ENCODE measurements at regions of chr2 and their contacts with region 1.

Region 1: GRCh38 chr2:218806346-218806978 is 24.5 kb downstream of the CYP27A1 start:
- DNase-seq: peak; percentile 91
- ATAC-seq: peak; percentile 81
- H3K4me3 ChIP-seq: peak overlapping the region in 2 of 3 experiments; percentile 38 to 40; a peak in 4 of 6 replicates
- H3K27ac ChIP-seq: peak overlapping the region; percentile 54
- H3K4me1 ChIP-seq: peaks cover 32% of the 10 kb centered on the region
- H3K27me3 ChIP-seq: no peaks in the 10 kb centered on the region
- CTCF ChIP-seq: no peak
- EP300 ChIP-seq: peak; percentile 86 to 98
- POLR2A ChIP-seq: no peak
- RAD21 ChIP-seq: no peak

Region 2: DNA sequence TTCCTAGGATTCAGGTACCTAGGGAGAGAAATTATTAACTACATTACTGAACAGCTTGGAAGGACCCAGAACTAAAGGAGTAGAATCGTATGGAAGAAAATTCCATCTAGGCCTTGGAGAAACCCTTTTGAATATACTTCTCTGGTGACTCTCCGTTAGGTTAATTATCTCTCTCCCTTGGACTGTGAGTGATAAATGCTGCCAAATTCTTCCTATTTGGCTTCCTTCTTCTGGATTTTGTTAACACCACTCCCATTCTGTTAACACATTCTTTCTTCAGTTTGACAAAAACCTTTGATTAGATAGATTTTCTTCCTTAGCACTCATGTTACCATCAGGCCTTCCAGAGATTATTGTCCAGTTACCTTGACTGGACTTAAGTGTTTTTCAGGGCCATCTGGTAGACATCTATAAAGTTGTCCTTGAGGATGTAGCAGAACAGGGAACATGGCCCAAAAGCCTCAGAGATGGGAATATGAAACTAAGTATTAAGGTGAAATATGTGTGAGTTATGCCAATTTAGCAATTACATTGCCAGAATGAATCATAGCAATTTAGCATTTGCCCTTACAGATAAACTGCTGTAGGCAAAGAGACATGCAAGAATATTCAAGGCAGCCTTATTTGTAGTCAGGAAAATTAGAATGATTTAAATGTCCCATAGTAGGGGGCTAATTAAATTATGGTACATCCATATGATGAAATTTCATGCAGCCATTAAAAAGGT is 17.8 kb before region 1 on chr2:
- CTCF ChIA-PET with region 1: no interaction called
- POLR2A ChIA-PET with region 1: interaction called, 3 read pairs
- in situ Hi-C with region 1: no loop called
- intact Hi-C with region 1: loop called (anchors 1 kb)
- DNase-seq: no peak
- ATAC-seq: no peak
- H3K4me3 ChIP-seq: no peak overlapping the region
- H3K27ac ChIP-seq: no peak overlapping the region
- H3K4me1 ChIP-seq: peaks cover 78% of the 10 kb centered on the region
- H3K27me3 ChIP-seq: no peaks in the 10 kb centered on the region
- CTCF ChIP-seq: no peak
- EP300 ChIP-seq: no peak
- POLR2A ChIP-seq: no peak
- RAD21 ChIP-seq: no peak

Region 3: DNA sequence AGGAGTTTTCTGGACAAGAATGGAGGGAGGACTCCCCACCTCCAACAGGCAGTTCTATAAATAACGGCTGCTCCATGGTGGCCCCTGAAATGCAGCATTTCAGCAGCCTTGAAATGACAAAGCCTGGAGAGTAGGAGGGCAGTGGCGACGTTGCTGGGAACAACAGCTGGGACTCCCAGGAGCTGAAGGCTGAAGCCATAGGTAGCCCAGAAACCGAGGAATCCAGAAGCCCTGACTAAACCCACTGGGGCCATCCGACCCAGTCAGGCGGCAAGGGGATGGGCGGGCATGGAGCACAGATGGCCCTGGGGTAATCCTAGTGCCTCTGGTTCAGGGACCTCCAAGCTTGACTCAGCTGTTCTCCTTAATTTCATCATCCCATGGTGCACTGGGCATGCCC is 16.2 kb after region 1 on chr2:
- CTCF ChIA-PET with region 1: no interaction called
- POLR2A ChIA-PET with region 1: no interaction called
- in situ Hi-C with region 1: no loop called
- intact Hi-C with region 1: no loop called
- DNase-seq: no peak
- ATAC-seq: no peak
- H3K4me3 ChIP-seq: no peak overlapping the region
- H3K27ac ChIP-seq: no peak overlapping the region
- H3K4me1 ChIP-seq: peaks cover 3% of the 10 kb centered on the region; the same call in 1 of the 2 replicates
- H3K27me3 ChIP-seq: peaks cover 0 to 12% of the 10 kb centered on the region in 2 experiments; a peak in 3 of 5 replicates
- CTCF ChIP-seq: no peak
- EP300 ChIP-seq: no peak
- POLR2A ChIP-seq: no peak
- RAD21 ChIP-seq: no peak

Measured in HepG2 (cell line).